CD4-positive, alpha-beta memory T cell (primary cell): ENCODE measurements at regions of chr4 and their contacts with region 1.

Region 1: DNA sequence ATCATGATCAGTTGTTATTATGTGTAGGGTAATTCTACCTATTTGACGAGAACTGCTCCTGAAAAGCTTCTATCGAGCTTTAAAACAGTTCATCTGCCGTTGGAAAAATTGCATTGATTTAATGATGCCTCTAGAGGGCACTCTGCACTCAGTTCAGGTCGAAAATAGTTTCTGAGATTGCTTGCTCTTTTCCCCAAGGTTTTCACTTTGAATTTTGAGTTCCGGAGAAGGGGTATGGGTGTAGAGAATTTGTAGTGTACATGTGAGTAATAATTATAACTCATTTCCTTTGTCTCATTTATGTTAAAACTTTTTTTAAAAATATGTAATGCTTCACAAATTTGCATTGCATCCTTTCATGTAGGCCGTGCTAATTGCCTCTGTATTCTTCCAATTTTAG is 28.4 kb upstream of the TNIP3 start:
- DNase-seq: peak in 3 of 5 donors; percentile 33 to 47 (median 46)
- H3K4me3 ChIP-seq: no peak overlapping the region
- H3K4me3 Mint-ChIP-seq: peak overlapping the region; percentile 40 to 83 (median 73)
- H3K27ac ChIP-seq: no peak overlapping the region
- H3K27ac Mint-ChIP-seq: peak overlapping the region in 4 of 7 donors; percentile 0 to 79 (median 60)
- H3K4me1 ChIP-seq: peaks cover 53% of the 10 kb centered on the region
- H3K4me1 Mint-ChIP-seq: peaks cover 37 to 51% (median 44%) of the 10 kb centered on the region in 4 donors
- H3K27me3 ChIP-seq: no peaks in the 10 kb centered on the region
- H3K27me3 Mint-ChIP-seq: no peaks in the 10 kb centered on the region

Region 2: GRCh38 chr4:120922381-120923206 is 269.9 kb before region 1 on chr4 and contains the start of gene PRDM5:
- CTCF ChIA-PET with region 1: no interaction called
- POLR2A ChIA-PET with region 1: no interaction called
- intact Hi-C with region 1: loop called (anchors 10 kb)
- DNase-seq: peak in 4 of 5 donors; percentile 2 to 15 (median 6)
- H3K4me3 ChIP-seq: peak within 1 kb of the TSS in 1 of 2 donors; percentile 49
- H3K4me3 Mint-ChIP-seq: peak within 1 kb of the TSS; percentile 82 to 96 (median 90)
- H3K27ac ChIP-seq: no peak within 1 kb of the TSS
- H3K27ac Mint-ChIP-seq: peak within 1 kb of the TSS in 6 of 7 donors; percentile 38 to 70 (median 50)
- H3K4me1 ChIP-seq: peaks cover 9% of the 10 kb centered on the region
- H3K4me1 Mint-ChIP-seq: peaks cover 9 to 17% (median 10%) of the 10 kb centered on the region in 4 donors
- H3K27me3 ChIP-seq: no peaks in the 10 kb centered on the region
- H3K27me3 Mint-ChIP-seq: peaks cover 17 to 24% of the 10 kb centered on the region in 2 donors
- total RNA-seq, gene PRDM5: 0.28 to 0.84 TPM

Region 3: DNA sequence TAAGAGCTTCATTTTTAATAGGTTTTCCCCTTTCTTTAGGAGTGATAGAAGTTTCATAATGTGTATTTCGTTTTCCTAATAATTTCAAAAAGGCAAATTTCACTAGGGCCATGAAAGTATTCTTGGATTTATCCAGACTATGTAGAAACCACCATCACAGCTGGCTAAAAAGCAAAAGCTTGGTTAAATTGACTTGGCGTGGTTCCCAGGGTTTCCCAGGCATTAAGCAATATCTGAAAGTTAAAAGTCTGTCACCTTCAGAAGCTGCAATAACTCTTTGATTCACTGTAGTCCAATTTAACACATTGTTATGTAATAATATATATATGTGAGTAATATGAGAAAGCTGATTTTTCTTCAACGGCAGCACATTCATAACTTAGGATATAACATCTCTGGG is 158.5 kb before region 1 on chr4:
- CTCF ChIA-PET with region 1: no interaction called
- POLR2A ChIA-PET with region 1: no interaction called
- intact Hi-C with region 1: no loop called
- DNase-seq: no peak
- H3K4me3 ChIP-seq: no peak overlapping the region
- H3K4me3 Mint-ChIP-seq: no peak overlapping the region
- H3K27ac ChIP-seq: no peak overlapping the region
- H3K27ac Mint-ChIP-seq: no peak overlapping the region
- H3K4me1 ChIP-seq: no peaks in the 10 kb centered on the region
- H3K4me1 Mint-ChIP-seq: no peaks in the 10 kb centered on the region
- H3K27me3 ChIP-seq: no peaks in the 10 kb centered on the region
- H3K27me3 Mint-ChIP-seq: peaks cover 0 to 1% of the 10 kb centered on the region in 2 donors

Region 4: GRCh38 chr4:121139533-121140222 is 52.8 kb before region 1 on chr4:
- CTCF ChIA-PET with region 1: interaction called, 8 read pairs
- POLR2A ChIA-PET with region 1: no interaction called
- intact Hi-C with region 1: loop called (anchors 10 kb)
- DNase-seq: peak in 3 of 5 donors; percentile 21 to 33 (median 31)
- H3K4me3 ChIP-seq: no peak overlapping the region
- H3K4me3 Mint-ChIP-seq: peak overlapping the region in 3 of 8 donors; percentile 15 to 40 (median 27)
- H3K27ac ChIP-seq: no peak overlapping the region
- H3K27ac Mint-ChIP-seq: peak overlapping the region in 6 of 7 donors; percentile 0 to 79 (median 72)
- H3K4me1 ChIP-seq: peaks cover 22% of the 10 kb centered on the region
- H3K4me1 Mint-ChIP-seq: peaks cover 19 to 39% (median 30%) of the 10 kb centered on the region in 4 donors
- H3K27me3 ChIP-seq: no peaks in the 10 kb centered on the region
- H3K27me3 Mint-ChIP-seq: no peaks in the 10 kb centered on the region

Region 5: DNA sequence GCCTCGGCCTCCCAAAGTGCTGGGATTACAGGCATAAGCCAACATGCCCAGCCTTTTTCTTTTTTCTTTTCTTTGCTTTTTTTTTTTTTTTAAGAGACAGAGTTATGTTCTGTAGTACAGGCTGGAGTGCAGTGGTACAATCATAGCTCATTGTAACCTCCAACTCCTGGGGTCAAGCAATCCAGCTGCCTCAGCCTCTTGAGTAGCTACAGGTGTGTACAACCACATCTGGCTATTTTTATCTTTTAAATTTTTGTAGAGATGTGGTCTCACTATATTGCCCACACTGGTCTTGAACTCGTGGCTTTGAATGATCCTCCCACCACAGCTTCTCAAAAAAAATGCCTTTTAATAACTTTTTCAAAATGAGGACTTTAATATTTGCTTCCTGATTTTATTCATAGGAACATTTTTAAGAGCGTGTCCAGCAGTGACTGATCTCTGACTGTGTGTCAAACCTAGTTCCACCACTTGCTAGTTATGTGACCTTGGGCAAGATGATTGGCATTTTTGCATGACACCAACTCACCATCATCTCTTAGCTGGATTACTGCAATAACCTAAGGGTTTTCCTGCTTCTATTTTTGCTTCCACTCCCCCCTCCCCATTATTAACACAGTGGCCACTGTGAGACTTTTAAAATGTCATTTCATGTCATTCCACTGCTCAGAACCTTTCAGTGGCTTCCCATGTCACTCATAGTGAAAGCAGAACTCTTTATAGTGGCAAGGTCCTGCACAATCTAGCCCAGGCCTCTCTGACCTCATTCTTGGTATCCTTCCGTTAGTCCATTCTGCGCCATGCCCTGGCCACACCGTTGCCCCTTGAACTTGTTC is 23.8 kb before region 1 on chr4:
- CTCF ChIA-PET with region 1: interaction called, 32 read pairs
- POLR2A ChIA-PET with region 1: interaction called, 8 read pairs
- intact Hi-C with region 1: no loop called
- DNase-seq: no peak
- H3K4me3 ChIP-seq: no peak overlapping the region
- H3K4me3 Mint-ChIP-seq: no peak overlapping the region
- H3K27ac ChIP-seq: no peak overlapping the region
- H3K27ac Mint-ChIP-seq: peak overlapping the region in 1 of 7 donors; percentile 19
- H3K4me1 ChIP-seq: peaks cover 28% of the 10 kb centered on the region
- H3K4me1 Mint-ChIP-seq: peaks cover 32 to 48% (median 39%) of the 10 kb centered on the region in 4 donors
- H3K27me3 ChIP-seq: no peaks in the 10 kb centered on the region
- H3K27me3 Mint-ChIP-seq: no peaks in the 10 kb centered on the region

Region 6: DNA sequence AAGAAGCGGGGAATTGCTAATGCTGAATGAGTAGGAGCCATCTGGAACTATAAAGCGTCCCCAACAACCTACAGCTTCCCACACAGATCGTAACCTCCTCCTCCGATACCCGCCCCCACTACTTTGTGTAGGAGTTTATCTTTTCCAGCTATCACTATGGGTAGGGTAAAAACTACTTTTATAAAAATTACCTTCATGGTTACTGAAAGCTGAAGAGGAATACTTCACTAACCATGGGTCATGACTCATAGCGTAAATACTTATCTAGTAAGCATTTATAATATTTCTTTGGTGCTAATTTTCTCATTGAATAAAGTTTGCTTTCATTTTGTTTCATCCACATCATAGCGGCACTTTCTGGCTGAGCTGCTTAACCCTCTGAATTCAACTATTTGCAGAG is 51.0 kb after region 1 on chr4:
- CTCF ChIA-PET with region 1: interaction called, 203 read pairs
- POLR2A ChIA-PET with region 1: no interaction called
- intact Hi-C with region 1: no loop called
- DNase-seq: peak in 2 of 5 donors; percentile 12 to 21
- H3K4me3 ChIP-seq: peak overlapping the region; percentile 38 to 52
- H3K4me3 Mint-ChIP-seq: peak overlapping the region; percentile 78 to 94 (median 87)
- H3K27ac ChIP-seq: no peak overlapping the region
- H3K27ac Mint-ChIP-seq: peak overlapping the region in 5 of 7 donors; percentile 13 to 79 (median 33)
- H3K4me1 ChIP-seq: peaks cover 5% of the 10 kb centered on the region
- H3K4me1 Mint-ChIP-seq: peaks cover 6 to 18% (median 16%) of the 10 kb centered on the region in 4 donors
- H3K27me3 ChIP-seq: no peaks in the 10 kb centered on the region
- H3K27me3 Mint-ChIP-seq: no peaks in the 10 kb centered on the region

Region 7: GRCh38 chr4:121370729-121371325 is 178.3 kb after region 1 on chr4:
- CTCF ChIA-PET with region 1: interaction called, 3 read pairs
- POLR2A ChIA-PET with region 1: no interaction called
- intact Hi-C with region 1: loop called (anchors 5 kb)
- DNase-seq: peak in 4 of 5 donors; percentile 10 to 22 (median 18)
- H3K4me3 ChIP-seq: no peak overlapping the region
- H3K4me3 Mint-ChIP-seq: no peak overlapping the region
- H3K27ac ChIP-seq: no peak overlapping the region
- H3K27ac Mint-ChIP-seq: no peak overlapping the region
- H3K4me1 ChIP-seq: no peaks in the 10 kb centered on the region
- H3K4me1 Mint-ChIP-seq: no peaks in the 10 kb centered on the region
- H3K27me3 ChIP-seq: no peaks in the 10 kb centered on the region
- H3K27me3 Mint-ChIP-seq: peaks cover 12 to 16% of the 10 kb centered on the region in 2 donors

Region 8: GRCh38 chr4:121397941-121398601 is 205.6 kb after region 1 on chr4:
- CTCF ChIA-PET with region 1: no interaction called
- POLR2A ChIA-PET with region 1: no interaction called
- intact Hi-C with region 1: no loop called
- DNase-seq: no peak
- H3K4me3 ChIP-seq: no peak overlapping the region
- H3K4me3 Mint-ChIP-seq: no peak overlapping the region
- H3K27ac ChIP-seq: no peak overlapping the region
- H3K27ac Mint-ChIP-seq: no peak overlapping the region
- H3K4me1 ChIP-seq: no peaks in the 10 kb centered on the region
- H3K4me1 Mint-ChIP-seq: no peaks in the 10 kb centered on the region
- H3K27me3 ChIP-seq: no peaks in the 10 kb centered on the region
- H3K27me3 Mint-ChIP-seq: peaks cover 2 to 5% of the 10 kb centered on the region in 2 donors